ENCODE measurements at regions of chr6 and their contacts with region 1.

Region 1: GRCh38 chr6:15254070-15254841 is 8.4 kb downstream of the JARID2 start:
- DNase-seq: peak in 1 of 10 donors; percentile 47
- H3K4me3 ChIP-seq: peak overlapping the region in 1 of 59 donors; percentile 5
- H3K27ac ChIP-seq: peak overlapping the region in 57 of 59 donors; percentile 18 to 99 (median 67)
- H3K27me3 ChIP-seq: no peaks in the 10 kb centered on the region
- CTCF ChIP-seq: peak in 53 of 56 donors; percentile 23 to 77 (median 53)

Region 2: DNA sequence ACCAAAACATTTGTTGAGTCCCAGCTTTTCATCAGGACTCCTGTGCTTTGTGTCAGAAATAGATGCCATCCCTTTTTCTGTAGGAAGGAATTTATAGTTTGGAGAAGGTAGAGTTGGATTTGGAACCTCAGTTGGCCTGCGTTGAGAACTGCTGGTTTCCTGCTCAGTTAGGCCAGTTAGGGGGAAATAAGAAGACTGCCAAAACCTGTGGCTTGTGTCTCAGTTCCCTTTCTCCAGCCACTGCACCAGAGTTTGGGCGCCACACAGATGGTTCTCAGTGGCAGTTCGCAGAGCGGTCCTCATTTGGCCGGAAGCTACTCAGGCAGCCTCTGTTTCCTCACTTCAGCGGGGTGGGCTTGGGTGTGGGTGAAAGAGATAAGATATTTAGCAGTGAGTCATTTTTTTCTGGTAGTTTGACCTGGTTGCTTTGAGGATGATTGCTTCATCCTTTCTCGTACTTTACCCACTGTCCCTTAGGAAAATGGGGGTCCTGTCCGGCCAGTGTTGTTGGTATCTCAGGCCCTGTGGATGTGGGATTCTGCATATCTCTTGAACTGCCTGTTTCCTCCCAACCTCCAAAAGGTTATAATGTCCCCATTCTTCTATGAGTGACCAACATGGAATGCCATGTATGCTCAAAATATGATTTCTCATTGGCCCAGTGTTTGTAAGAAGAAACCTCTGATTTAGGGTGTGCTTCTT is 45.3 kb after region 1 on chr6:
- intact Hi-C with region 1: no loop called
- DNase-seq: peak in 1 of 10 donors; percentile 48
- H3K4me3 ChIP-seq: no peak overlapping the region
- H3K27ac ChIP-seq: peak overlapping the region in 3 of 59 donors; percentile 8 to 40 (median 10)
- H3K27me3 ChIP-seq: no peaks in the 10 kb centered on the region
- CTCF ChIP-seq: no peak

Region 3: GRCh38 chr6:15389765-15390723 is 135.8 kb after region 1 on chr6:
- intact Hi-C with region 1: loop called (anchors 5 kb)
- DNase-seq: peak in 1 of 10 donors; percentile 30
- H3K4me3 ChIP-seq: peak overlapping the region in 2 of 59 donors; percentile 3 to 15
- H3K27ac ChIP-seq: peak overlapping the region in 20 of 59 donors; percentile 0 to 67 (median 20)
- H3K27me3 ChIP-seq: no peaks in the 10 kb centered on the region
- CTCF ChIP-seq: peak in 54 of 56 donors; percentile 47 to 80 (median 66)